A549 (cell line): ENCODE measurements at regions of chr17 and their contacts with region 1.

Region 1: DNA sequence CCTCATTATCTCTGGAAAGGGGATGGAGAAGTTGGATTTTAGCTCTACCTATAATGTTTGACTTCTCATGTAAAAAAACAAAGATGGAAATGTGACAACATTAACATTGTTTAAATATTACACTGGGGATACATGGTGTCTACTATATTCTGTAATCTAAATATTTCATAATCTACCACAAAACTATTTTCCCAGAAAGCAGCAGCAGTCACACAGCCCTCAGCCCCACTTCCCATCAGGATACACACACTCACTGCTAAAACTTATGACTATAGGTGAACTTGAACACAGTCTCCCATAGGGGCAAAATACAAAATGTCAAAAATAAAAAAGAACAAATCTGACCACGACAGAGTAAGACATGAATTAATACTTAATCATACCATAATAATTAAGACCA is 95.7 kb downstream of the KANSL1 start:
- DNase-seq: no peak
- ATAC-seq: peak in 1 of 2 experiments; percentile 12; a peak in 2 of 6 replicates
- H3K4me3 ChIP-seq: no peak overlapping the region
- H3K27ac ChIP-seq: no peak overlapping the region
- H3K4me1 ChIP-seq: peaks cover 72% of the 10 kb centered on the region
- CTCF ChIP-seq: no peak
- EP300 ChIP-seq: no peak
- POLR2A ChIP-seq: no peak
- RAD21 ChIP-seq: no peak

Region 2: GRCh38 chr17:45852535-45853297 is 244.8 kb before region 1 on chr17:
- CTCF ChIA-PET with region 1: no interaction called
- POLR2A ChIA-PET with region 1: no interaction called
- DNase-seq: peak; percentile 57 to 70
- ATAC-seq: peak; percentile 25 to 73; a peak in 4 of 6 replicates
- H3K4me3 ChIP-seq: peak overlapping the region; percentile 14; the same call in 1 of the 3 replicates
- H3K27ac ChIP-seq: peak overlapping the region in 1 of 2 experiments; percentile 61; a peak in 1 of 6 replicates
- H3K4me1 ChIP-seq: 0 out of 3 replicates have a peak, but pooled peaks cover 2% of the 10 kb centered on the region
- CTCF ChIP-seq: peak; percentile 97
- EP300 ChIP-seq: no peak
- POLR2A ChIP-seq: no peak
- RAD21 ChIP-seq: peak; percentile 94 to 95

Region 3: GRCh38 chr17:46009681-46010596 is 87.6 kb before region 1 on chr17:
- CTCF ChIA-PET with region 1: no interaction called
- POLR2A ChIA-PET with region 1: no interaction called
- DNase-seq: peak; percentile 73 to 84
- ATAC-seq: peak; percentile 84 to 85
- H3K4me3 ChIP-seq: peak overlapping the region; percentile 39
- H3K27ac ChIP-seq: peak overlapping the region in 1 of 2 experiments; percentile 27; a peak in 2 of 6 replicates
- H3K4me1 ChIP-seq: peaks cover 8% of the 10 kb centered on the region; the same call in 2 of the 3 replicates
- CTCF ChIP-seq: no peak
- EP300 ChIP-seq: no peak
- POLR2A ChIP-seq: no peak
- RAD21 ChIP-seq: no peak

Region 4: DNA sequence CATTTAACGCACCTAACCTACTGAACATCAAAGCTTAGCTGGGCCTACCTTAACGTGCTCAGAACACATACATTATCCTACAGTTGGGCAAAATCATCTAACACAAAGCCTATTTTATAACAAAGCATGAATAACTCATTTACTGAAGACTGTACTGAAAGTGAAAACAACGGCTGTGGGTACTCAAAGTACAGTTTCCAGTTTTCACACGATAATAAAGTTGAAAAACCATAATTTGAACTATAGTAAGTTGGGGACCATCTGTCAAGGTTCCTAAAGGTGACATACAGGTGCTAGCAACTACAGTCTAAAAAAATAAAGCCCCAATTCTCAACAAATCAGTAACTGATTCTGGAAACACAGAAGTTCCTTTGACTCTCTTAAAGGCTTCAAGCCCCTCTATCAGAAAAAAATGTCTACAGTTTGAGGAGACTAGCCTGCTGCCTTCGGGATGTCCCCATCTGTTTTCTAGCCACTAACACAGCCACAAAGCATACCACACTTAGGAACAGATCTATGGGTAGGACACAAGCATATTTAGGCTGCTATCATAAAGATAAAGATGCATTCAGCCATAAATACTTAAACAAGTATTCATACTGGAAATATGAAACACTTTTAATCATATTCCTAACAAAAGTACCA is 24.5 kb after region 1 on chr17:
- CTCF ChIA-PET with region 1: interaction called, 13 read pairs
- POLR2A ChIA-PET with region 1: no interaction called
- DNase-seq: no peak
- ATAC-seq: no peak
- H3K4me3 ChIP-seq: no peak overlapping the region
- H3K27ac ChIP-seq: no peak overlapping the region
- H3K4me1 ChIP-seq: peaks cover 24% of the 10 kb centered on the region
- CTCF ChIP-seq: no peak
- EP300 ChIP-seq: no peak
- POLR2A ChIP-seq: no peak
- RAD21 ChIP-seq: no peak